ENCODE measurements at regions of chr19 and their contacts with region 1.

Region 1: GRCh38 chr19:46147791-46148288 is at the start of gene IGFL2:
- DNase-seq: no peak
- ATAC-seq: no peak
- total RNA-seq, gene IGFL2: 0.85 TPM

Region 2: GRCh38 chr19:45739498-45740439 is 408.1 kb before region 1 on chr19:
- intact Hi-C with region 1: no loop called
- DNase-seq: no peak
- ATAC-seq: no peak

Region 3: GRCh38 chr19:46232029-46232428 is 84.2 kb after region 1 on chr19:
- intact Hi-C with region 1: loop called (anchors 5 kb)
- DNase-seq: peak; percentile 32
- ATAC-seq: no peak

Measured in sciatic nerve (tissue), 2 donors.